ENCODE measurements at regions of chr11 and their contacts with region 1.

Region 1: DNA sequence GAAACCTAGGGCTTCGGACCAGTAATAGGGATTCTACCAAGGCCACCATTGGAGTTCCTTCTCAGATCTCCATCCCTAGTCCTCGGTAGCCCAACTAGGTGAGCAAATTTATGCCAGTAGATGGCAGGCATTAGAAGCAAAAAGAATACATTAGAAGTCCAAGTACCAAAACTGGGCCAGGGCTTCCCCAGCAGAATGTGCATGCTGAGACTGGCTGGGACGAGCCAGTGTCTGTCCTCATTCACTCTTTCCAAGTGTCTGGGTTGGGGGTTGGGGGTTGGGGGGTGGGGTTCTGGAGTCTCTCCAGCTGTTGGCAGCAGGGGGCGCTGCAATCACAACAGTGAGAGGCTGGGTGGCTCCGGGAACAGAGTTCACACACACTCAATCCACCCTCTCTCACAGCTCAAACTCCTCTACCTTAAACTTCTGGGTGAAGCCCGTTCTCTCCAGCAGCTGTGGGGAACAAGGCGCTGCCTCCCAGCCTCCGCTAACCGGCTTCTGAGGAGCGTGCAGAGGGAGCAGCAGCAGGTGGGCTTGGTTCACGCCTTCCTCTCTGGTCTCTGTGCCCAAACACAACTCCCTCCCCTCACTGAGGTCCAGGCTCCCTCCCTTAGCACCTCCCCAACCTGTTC is 57.5 kb downstream of the BTG4 start:
- DNase-seq: peak in 8 of 9 experiments; percentile 19 to 61 (median 49)
- ATAC-seq: peak; percentile 61
- H3K4me3 ChIP-seq: no peak overlapping the region
- H3K4me3 Mint-ChIP-seq: no peak overlapping the region
- H3K27ac ChIP-seq: no peak overlapping the region
- H3K27ac Mint-ChIP-seq: no peak overlapping the region
- H3K4me1 ChIP-seq: no peaks in the 10 kb centered on the region
- H3K4me1 Mint-ChIP-seq: no peaks in the 10 kb centered on the region
- H3K27me3 ChIP-seq: no peaks in the 10 kb centered on the region
- H3K27me3 Mint-ChIP-seq: peaks cover 8% of the 10 kb centered on the region
- CTCF ChIP-seq: peak; percentile 20

Region 2: GRCh38 chr11:111540114-111540936 is 85.6 kb after region 1 on chr11 and contains the start of gene LAYN:
- CTCF ChIA-PET with region 1: no interaction called
- POLR2A ChIA-PET with region 1: no interaction called
- intact Hi-C with region 1: loop called in 1 of 2 experiments (anchors 10 kb)
- DNase-seq: peak; percentile 18 to 70 (median 59)
- ATAC-seq: peak; percentile 32
- H3K4me3 ChIP-seq: peak within 1 kb of the TSS; percentile 49 to 55
- H3K4me3 Mint-ChIP-seq: peak within 1 kb of the TSS; percentile 82
- H3K27ac ChIP-seq: peak within 1 kb of the TSS; percentile 9 to 17
- H3K27ac Mint-ChIP-seq: peak within 1 kb of the TSS; percentile 88
- H3K4me1 ChIP-seq: peaks cover 37% of the 10 kb centered on the region
- H3K4me1 Mint-ChIP-seq: peaks cover 38% of the 10 kb centered on the region
- H3K27me3 ChIP-seq: peaks cover 0 to 18% of the 10 kb centered on the region in 2 experiments
- H3K27me3 Mint-ChIP-seq: peaks cover 27% of the 10 kb centered on the region
- CTCF ChIP-seq: no peak
- total RNA-seq, gene LAYN: 9.5 to 11.2 TPM

Region 3: DNA sequence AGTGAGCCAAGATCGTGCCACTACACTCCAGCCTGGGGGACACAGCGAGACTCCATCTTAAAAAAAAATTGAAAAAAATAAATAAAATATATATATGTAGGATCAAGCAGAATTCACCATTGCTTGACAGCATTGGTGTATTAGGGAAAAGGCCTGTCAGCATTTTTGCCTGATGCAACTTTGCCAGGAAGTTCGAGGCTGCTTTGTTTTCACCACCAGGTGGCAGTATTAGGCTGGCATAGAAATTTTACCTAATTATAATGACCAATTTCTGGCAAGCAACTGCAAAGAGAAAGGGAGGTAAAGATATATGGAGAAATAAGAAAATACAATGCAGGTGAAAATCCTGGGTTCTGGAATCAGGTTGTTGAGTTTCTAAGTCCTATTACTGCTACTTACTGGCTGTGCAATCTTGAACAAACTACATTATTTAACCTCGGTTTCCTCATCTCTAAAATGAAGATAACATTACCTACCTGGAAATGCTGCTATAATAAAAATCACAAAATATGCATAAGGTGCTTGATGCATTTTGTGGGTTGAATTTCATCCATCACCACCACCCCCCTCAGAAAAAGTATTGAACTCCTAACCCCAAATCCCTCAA is 110.5 kb after region 1 on chr11:
- CTCF ChIA-PET with region 1: no interaction called
- POLR2A ChIA-PET with region 1: no interaction called
- intact Hi-C with region 1: loop called in 1 of 2 experiments (anchors 2 kb)
- DNase-seq: peak; percentile 17 to 74 (median 63)
- ATAC-seq: no peak
- H3K4me3 ChIP-seq: no peak overlapping the region
- H3K4me3 Mint-ChIP-seq: no peak overlapping the region
- H3K27ac ChIP-seq: no peak overlapping the region
- H3K27ac Mint-ChIP-seq: no peak overlapping the region
- H3K4me1 ChIP-seq: no peaks in the 10 kb centered on the region
- H3K4me1 Mint-ChIP-seq: no peaks in the 10 kb centered on the region
- H3K27me3 ChIP-seq: no peaks in the 10 kb centered on the region
- H3K27me3 Mint-ChIP-seq: no peaks in the 10 kb centered on the region
- CTCF ChIP-seq: peak; percentile 98

Measured in CD8-positive, alpha-beta T cell (primary cell).